HEK293 (cell line): ENCODE measurements at regions of chr17 and their contacts with region 1.

Region 1: GRCh38 chr17:35612924-35613521 is 25.9 kb downstream of the AP2B1 start:
- H3K4me3 ChIP-seq: no peak overlapping the region
- H3K27ac ChIP-seq: no peak overlapping the region
- H3K4me1 ChIP-seq: peaks cover 6% of the 10 kb centered on the region
- CTCF ChIP-seq: peak; percentile 44; the same call in 1 of the 2 replicates

Region 2: GRCh38 chr17:35519439-35519838 is 93.6 kb before region 1 on chr17:
- CTCF ChIA-PET with region 1: no interaction called
- POLR2A ChIA-PET with region 1: no interaction called
- H3K4me3 ChIP-seq: no peak overlapping the region
- H3K27ac ChIP-seq: no peak overlapping the region
- H3K4me1 ChIP-seq: peaks cover 10% of the 10 kb centered on the region
- CTCF ChIP-seq: no peak

Region 3: GRCh38 chr17:35596530-35597233 is 16.3 kb before region 1 on chr17:
- CTCF ChIA-PET with region 1: interaction called, 40 read pairs
- POLR2A ChIA-PET with region 1: interaction called, 3 read pairs
- H3K4me3 ChIP-seq: no peak overlapping the region
- H3K27ac ChIP-seq: no peak overlapping the region
- H3K4me1 ChIP-seq: no peaks in the 10 kb centered on the region
- CTCF ChIP-seq: no peak

Region 4: GRCh38 chr17:35641032-35641431 is 28.0 kb after region 1 on chr17:
- CTCF ChIA-PET with region 1: interaction called, 19 read pairs
- POLR2A ChIA-PET with region 1: no interaction called
- H3K4me3 ChIP-seq: no peak overlapping the region
- H3K27ac ChIP-seq: no peak overlapping the region
- H3K4me1 ChIP-seq: no peaks in the 10 kb centered on the region
- CTCF ChIP-seq: no peak

Region 5: DNA sequence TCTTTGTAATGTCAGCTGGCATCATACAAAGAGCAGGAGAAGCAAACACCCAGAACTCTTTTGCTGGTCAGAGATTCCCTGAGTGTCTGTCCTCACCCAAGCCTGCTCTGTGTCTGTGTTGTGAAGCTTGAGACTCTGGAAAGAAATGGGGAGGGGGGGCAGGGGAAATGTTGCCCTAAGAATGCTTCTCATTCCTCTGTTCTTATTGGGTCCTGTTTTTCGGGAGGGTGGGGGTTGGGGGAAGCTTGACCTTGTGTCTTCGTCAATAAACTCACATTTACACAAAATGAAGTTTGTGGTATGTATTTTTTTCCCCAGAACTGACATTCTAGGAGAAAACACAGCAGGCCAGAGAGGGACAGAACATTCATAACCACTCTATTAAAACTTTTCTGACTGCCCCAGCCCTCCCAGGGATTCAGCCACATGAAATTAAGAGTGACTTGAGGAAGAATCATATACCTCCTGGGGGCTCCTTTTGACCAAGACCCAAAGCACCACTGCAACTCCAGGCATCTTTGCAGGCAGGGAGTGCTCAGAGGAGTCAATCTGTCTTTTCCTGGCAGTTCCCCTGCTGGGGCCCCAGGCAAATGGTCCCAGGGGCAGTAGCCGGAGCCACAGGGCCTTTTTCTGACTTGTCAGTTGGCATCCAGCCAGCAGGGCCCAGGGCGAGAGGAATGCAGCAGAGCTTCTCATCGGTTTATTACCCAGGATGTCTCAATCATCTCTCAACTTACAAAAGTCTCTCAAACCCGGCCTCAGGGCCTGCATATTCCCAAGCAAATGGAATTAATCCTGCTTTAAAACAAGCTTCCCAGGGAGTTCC is 113.3 kb after region 1 on chr17:
- CTCF ChIA-PET with region 1: interaction called, 23 read pairs
- POLR2A ChIA-PET with region 1: no interaction called
- H3K4me3 ChIP-seq: no peak overlapping the region
- H3K27ac ChIP-seq: peak overlapping the region; percentile 56
- H3K4me1 ChIP-seq: peaks cover 29% of the 10 kb centered on the region
- CTCF ChIP-seq: no peak

Region 6: DNA sequence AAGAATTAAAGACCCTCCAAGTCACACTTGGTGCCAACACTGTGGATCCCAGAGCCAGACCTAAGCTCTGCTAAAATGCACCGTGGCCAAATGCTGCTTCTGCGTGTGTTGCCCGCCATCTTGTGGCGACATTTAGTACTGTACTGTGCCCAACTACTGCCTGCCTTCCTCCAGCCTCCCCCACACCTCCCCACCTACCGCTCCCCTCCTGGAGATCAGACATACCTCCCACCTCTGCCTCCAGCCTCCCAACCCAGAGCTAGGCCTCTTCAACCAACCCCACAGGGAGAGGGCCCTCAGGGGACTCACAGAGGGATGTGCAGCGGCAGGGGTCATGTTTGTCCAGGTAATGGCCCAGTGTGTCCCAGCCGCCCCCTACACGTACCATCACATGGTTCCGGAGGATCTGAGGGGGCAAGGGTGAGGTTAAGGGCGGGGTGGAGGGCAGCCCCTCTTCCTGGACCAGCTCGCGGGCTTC is 134.6 kb after region 1 on chr17:
- CTCF ChIA-PET with region 1: interaction called, 321 read pairs
- POLR2A ChIA-PET with region 1: interaction called, 7 read pairs
- H3K4me3 ChIP-seq: no peak overlapping the region
- H3K27ac ChIP-seq: no peak overlapping the region
- H3K4me1 ChIP-seq: no peaks in the 10 kb centered on the region
- CTCF ChIP-seq: peak; percentile 97